CD8-positive, alpha-beta memory T cell (primary cell): ENCODE measurements at regions of chr9 and their contacts with region 1.

Region 1: DNA sequence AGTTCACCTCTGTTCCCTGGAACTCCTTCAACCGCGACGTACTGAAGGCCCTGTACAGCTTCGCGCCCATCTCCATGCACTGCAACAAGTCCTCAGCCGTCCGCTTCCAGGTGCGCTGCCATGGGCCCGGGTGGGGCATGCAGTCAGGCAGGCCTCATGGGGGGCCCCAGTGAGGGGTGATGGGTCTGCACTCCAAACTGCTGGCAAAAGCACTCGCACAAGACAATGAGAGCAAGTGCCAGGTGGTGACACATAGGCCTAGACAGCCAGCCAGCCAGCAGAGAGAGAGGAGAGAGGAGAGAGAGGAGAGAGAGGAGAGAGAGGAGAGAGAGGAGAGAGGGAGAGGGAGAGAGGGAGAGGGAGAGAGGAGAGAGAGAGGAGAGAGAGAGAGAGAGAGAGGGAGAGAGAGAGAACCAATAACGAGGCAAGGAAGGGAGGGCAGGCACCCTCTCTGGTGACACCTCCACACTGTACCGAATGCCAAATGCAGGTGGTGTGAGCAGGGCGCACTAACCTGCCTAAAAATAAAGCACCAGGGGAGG is 21.0 kb downstream of the DBH start:
- DNase-seq: no peak
- H3K4me3 ChIP-seq: peak overlapping the region; percentile 37
- H3K4me3 Mint-ChIP-seq: no peak overlapping the region
- H3K27ac ChIP-seq: no peak overlapping the region
- H3K27ac Mint-ChIP-seq: no peak overlapping the region
- H3K4me1 ChIP-seq: peaks cover 36% of the 10 kb centered on the region
- H3K4me1 Mint-ChIP-seq: peaks cover 0 to 18% (median 3%) of the 10 kb centered on the region in 3 donors
- H3K27me3 ChIP-seq: peaks cover 5% of the 10 kb centered on the region
- H3K27me3 Mint-ChIP-seq: peaks cover 24 to 50% of the 10 kb centered on the region in 2 donors

Region 2: DNA sequence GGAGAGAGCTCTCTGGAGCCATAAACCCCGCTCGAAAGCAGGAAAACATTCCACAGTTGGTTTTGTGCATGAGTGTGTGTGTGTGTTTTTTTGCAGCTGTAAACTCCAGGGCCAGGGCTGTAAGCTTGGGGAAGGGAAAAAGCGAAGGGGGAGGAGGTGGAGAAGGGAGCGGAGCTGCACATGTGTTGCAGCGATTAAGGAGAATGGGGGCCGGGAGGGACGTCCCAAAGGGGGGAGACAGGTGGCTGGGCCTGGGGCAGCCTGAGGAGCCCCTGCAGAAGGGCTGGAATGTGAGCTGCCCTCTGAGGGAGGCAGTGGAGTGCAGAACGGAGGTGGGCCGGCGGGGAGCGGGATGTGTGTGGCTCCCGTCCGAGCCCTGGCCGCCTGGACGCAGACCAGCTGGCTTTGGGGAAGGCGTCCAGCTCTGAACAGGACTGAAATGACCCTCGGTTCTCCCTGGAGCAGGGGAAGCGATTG is 129.7 kb before region 1 on chr9:
- CTCF ChIA-PET with region 1: no interaction called
- POLR2A ChIA-PET with region 1: no interaction called
- DNase-seq: no peak
- H3K4me3 ChIP-seq: no peak overlapping the region
- H3K4me3 Mint-ChIP-seq: no peak overlapping the region
- H3K27ac ChIP-seq: no peak overlapping the region
- H3K27ac Mint-ChIP-seq: no peak overlapping the region
- H3K4me1 ChIP-seq: no peaks in the 10 kb centered on the region
- H3K4me1 Mint-ChIP-seq: no peaks in the 10 kb centered on the region
- H3K27me3 ChIP-seq: no peaks in the 10 kb centered on the region
- H3K27me3 Mint-ChIP-seq: peaks cover 8 to 17% of the 10 kb centered on the region in 2 donors

Region 3: GRCh38 chr9:133715866-133716563 is 58.8 kb after region 1 on chr9:
- CTCF ChIA-PET with region 1: interaction called, 11 read pairs
- POLR2A ChIA-PET with region 1: no interaction called
- DNase-seq: peak in 1 of 5 donors; percentile 70
- H3K4me3 ChIP-seq: no peak overlapping the region
- H3K4me3 Mint-ChIP-seq: no peak overlapping the region
- H3K27ac ChIP-seq: no peak overlapping the region
- H3K27ac Mint-ChIP-seq: peak overlapping the region in 2 of 8 donors; percentile 42 to 73
- H3K4me1 ChIP-seq: no peaks in the 10 kb centered on the region
- H3K4me1 Mint-ChIP-seq: peaks cover 0 to 4% (median 0%) of the 10 kb centered on the region in 3 donors
- H3K27me3 ChIP-seq: no peaks in the 10 kb centered on the region
- H3K27me3 Mint-ChIP-seq: peaks cover 7 to 27% of the 10 kb centered on the region in 2 donors